CD4-positive, alpha-beta memory T cell (primary cell): ENCODE measurements at regions of chr19 and their contacts with region 1.

Region 1: GRCh38 chr19:57583521-57584416 is at the start of gene ZIK1:
- DNase-seq: peak; percentile 84 to 90 (median 89)
- H3K4me3 ChIP-seq: peak within 1 kb of the TSS; percentile 43 to 74
- H3K4me3 Mint-ChIP-seq: peak within 1 kb of the TSS; percentile 92 to 99 (median 96)
- H3K27ac ChIP-seq: no peak within 1 kb of the TSS
- H3K27ac Mint-ChIP-seq: peak within 1 kb of the TSS; percentile 65 to 94 (median 86)
- H3K4me1 ChIP-seq: peaks cover 21% of the 10 kb centered on the region
- H3K4me1 Mint-ChIP-seq: peaks cover 10 to 29% (median 19%) of the 10 kb centered on the region in 4 donors
- H3K27me3 ChIP-seq: no peaks in the 10 kb centered on the region
- H3K27me3 Mint-ChIP-seq: no peaks in the 10 kb centered on the region
- total RNA-seq, gene ZIK1: 11.1 to 11.3 TPM

Region 2: DNA sequence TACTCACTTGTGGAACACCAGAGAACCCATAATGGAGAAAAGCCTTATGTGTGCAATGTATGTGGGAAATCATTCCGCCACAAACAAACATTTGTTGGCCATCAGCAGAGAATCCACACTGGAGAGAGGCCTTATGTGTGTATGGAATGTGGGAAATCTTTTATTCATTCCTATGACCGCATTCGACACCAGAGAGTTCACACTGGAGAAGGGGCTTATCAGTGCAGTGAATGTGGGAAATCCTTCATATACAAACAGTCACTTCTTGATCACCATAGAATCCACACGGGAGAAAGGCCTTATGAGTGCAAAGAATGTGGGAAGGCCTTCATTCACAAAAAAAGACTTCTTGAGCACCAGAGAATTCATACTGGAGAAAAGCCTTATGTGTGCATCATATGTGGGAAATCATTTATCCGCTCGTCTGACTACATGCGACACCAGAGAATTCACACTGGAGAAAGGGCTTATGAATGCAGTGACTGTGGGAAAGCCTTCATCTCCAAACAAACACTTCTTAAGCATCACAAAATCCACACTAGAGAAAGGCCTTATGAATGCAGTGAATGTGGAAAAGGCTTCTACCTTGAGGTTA is 45.7 kb before region 1 on chr19:
- CTCF ChIA-PET with region 1: no interaction called
- POLR2A ChIA-PET with region 1: no interaction called
- intact Hi-C with region 1: no loop called
- DNase-seq: no peak
- H3K4me3 ChIP-seq: peak overlapping the region; percentile 12 to 19
- H3K4me3 Mint-ChIP-seq: no peak overlapping the region
- H3K27ac ChIP-seq: no peak overlapping the region
- H3K27ac Mint-ChIP-seq: no peak overlapping the region
- H3K4me1 ChIP-seq: no peaks in the 10 kb centered on the region
- H3K4me1 Mint-ChIP-seq: peaks cover 0 to 10% (median 4%) of the 10 kb centered on the region in 4 donors
- H3K27me3 ChIP-seq: no peaks in the 10 kb centered on the region
- H3K27me3 Mint-ChIP-seq: no peaks in the 10 kb centered on the region

Region 3: GRCh38 chr19:57599761-57600383 is 16.1 kb after region 1 on chr19 and contains the start of gene ZNF530:
- CTCF ChIA-PET with region 1: no interaction called
- POLR2A ChIA-PET with region 1: interaction called, 5 read pairs
- intact Hi-C with region 1: loop called (anchors 1 kb)
- DNase-seq: peak; percentile 74 to 80 (median 76)
- H3K4me3 ChIP-seq: peak within 1 kb of the TSS; percentile 38 to 76
- H3K4me3 Mint-ChIP-seq: peak within 1 kb of the TSS; percentile 86 to 93 (median 90)
- H3K27ac ChIP-seq: peak within 1 kb of the TSS; percentile 40
- H3K27ac Mint-ChIP-seq: peak within 1 kb of the TSS; percentile 28 to 93 (median 81)
- H3K4me1 ChIP-seq: peaks cover 16% of the 10 kb centered on the region
- H3K4me1 Mint-ChIP-seq: peaks cover 5 to 24% (median 19%) of the 10 kb centered on the region in 4 donors
- H3K27me3 ChIP-seq: no peaks in the 10 kb centered on the region
- H3K27me3 Mint-ChIP-seq: peaks cover 0 to 3% of the 10 kb centered on the region in 2 donors
- total RNA-seq, gene ZNF530: 9.9 to 10.9 TPM